ENCODE measurements at regions of chr11 and their contacts with region 1.

Region 1: GRCh38 chr11:73307323-73308002 is 613 bp upstream of the ARHGEF17 start:
- DNase-seq: peak; percentile 99

Region 2: DNA sequence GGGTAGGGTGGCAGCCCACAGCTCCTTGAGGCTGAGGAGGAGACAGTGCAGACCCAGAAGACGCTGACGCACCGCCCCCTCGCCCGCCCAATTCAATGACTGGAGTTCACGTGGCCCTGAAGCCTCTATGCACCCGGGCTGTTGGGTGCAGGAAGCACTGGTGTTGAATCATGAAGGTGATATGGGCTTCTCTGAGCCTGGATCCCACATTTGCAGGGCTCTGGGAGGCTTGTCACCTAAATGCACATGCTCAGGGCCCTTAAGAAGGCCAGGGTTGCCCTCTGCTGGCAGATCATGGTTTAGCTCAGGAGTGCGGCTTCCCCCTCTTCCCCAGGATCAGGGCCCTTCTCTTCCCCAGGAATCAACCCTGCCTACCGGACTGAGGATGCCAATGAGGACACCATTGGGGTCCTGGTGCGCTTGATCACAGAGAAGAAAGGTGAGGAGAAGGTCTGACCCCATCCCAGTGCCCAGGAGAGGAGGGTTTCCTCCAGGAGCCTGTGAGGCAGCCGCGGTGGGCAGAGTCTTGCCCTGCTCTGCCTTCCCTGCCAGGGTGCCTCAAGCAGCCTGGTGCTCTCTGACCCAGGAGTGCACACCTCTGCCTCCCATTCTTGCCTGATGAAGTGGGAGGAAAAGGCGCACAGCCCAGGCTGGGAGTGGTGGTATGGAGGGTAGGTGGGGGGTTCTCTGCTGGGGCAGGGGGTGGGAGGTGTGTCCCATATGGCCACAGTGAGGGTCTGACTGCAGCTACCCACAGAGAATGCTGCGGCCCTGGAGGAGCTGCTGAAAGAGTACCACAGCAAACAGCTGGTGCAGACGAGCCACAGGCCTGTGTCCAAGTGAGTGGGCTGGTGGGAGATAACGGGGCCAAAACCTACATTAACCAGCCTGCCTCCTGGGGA is 86.3 kb after region 1 on chr11:
- intact Hi-C with region 1: loop called (anchors 10 kb)
- DNase-seq: peak; percentile 91

Measured in posterior vena cava (tissue), 2 donors.